ENCODE measurements at regions of chr12 and their contacts with region 1.

Region 1: DNA sequence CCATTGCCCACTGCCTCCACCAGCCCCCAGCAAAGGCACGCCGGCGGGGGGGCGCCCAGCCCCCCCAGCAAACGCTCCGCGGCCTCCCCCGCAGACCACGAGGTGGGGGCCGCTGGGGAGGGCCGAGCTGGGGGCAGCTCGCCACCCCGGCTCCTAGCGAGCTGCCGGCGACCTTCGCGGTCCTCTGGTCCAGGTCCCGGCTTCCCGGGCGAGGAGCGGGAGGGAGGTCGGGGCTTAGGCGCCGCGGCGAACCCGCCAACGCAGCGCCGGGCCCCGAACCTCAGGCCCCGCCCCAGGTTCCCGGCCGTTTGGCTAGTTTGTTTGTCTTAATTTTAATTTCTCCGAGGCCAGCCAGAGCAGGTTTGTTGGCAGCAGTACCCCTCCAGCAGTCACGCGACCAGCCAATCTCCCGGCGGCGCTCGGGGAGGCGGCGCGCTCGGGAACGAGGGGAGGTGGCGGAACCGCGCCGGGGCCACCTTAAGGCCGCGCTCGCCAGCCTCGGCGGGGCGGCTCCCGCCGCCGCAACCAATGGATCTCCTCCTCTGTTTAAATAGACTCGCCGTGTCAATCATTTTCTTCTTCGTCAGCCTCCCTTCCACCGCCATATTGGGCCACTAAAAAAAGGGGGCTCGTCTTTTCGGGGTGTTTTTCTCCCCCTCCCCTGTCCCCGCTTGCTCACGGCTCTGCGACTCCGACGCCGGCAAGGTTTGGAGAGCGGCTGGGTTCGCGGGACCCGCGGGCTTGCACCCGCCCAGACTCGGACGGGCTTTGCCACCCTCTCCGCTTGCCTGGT is at the start of gene CDKN1B:
- DNase-seq: peak; percentile 98
- H3K4me3 ChIP-seq: peak within 1 kb of the TSS; percentile 67 to 99 (median 95)
- H3K27ac ChIP-seq: peak within 1 kb of the TSS; percentile 98
- H3K4me1 ChIP-seq: peaks cover 49% of the 10 kb centered on the region
- H3K27me3 ChIP-seq: no peaks in the 10 kb centered on the region
- CTCF ChIP-seq: no peak
- POLR2A ChIP-seq: peak; percentile 79
- total RNA-seq, gene CDKN1B: 32.0 and 40.8 TPM in 2 replicates

Region 2: GRCh38 chr12:10721651-10722501 is 1995.1 kb before region 1 on chr12:
- CTCF ChIA-PET with region 1: no interaction called
- POLR2A ChIA-PET with region 1: no interaction called
- dilution Hi-C with region 1: no loop called
- intact Hi-C with region 1: no loop called
- DNase-seq: peak; percentile 100
- H3K4me3 ChIP-seq: peak overlapping the region; percentile 87 to 92 (median 88)
- H3K27ac ChIP-seq: peak overlapping the region; percentile 98
- H3K4me1 ChIP-seq: peaks cover 57% of the 10 kb centered on the region
- H3K27me3 ChIP-seq: no peaks in the 10 kb centered on the region
- CTCF ChIP-seq: no peak
- POLR2A ChIP-seq: peak; percentile 39

Region 3: DNA sequence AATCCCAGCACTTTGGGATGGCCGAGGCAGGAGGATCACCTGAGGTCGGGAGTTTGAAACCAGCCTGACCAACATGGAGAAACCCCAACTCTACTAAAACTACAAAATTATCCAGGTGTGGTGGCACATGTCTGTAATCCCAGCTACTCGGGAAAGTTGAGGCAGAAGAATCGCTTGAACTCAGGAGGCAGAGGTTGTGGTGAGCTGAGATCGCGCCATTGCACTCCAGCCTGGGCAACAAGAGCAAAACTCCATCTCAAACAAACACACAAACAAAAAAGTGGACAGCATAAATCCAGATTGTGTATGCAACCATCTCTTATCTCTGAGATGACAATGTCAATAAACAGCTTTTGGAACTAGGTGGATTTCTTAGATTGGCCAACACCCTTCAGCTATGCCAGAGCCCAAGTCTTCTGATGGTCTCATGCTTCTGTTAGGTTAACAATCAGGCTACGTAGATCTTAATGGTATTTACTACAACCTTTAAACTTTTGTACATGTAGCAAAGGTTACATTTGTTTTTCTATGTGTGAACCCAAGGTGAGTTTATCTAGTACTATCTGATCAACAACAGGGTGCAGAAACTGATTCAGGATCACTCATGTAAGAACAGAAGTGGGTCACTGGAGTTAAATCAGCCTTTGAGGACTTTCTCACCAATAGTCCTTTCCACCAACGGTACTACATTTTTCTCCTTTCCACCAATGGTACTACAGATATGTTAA is 228.0 kb before region 1 on chr12:
- CTCF ChIA-PET with region 1: no interaction called
- POLR2A ChIA-PET with region 1: no interaction called
- dilution Hi-C with region 1: no loop called
- intact Hi-C with region 1: no loop called
- DNase-seq: no peak
- H3K4me3 ChIP-seq: no peak overlapping the region
- H3K27ac ChIP-seq: no peak overlapping the region
- H3K4me1 ChIP-seq: peaks cover 10% of the 10 kb centered on the region
- H3K27me3 ChIP-seq: no peaks in the 10 kb centered on the region
- CTCF ChIP-seq: no peak
- POLR2A ChIP-seq: no peak

Region 4: GRCh38 chr12:12696562-12697383 is 20.2 kb before region 1 on chr12:
- CTCF ChIA-PET with region 1: interaction called, 4 read pairs
- POLR2A ChIA-PET with region 1: interaction called, 4 read pairs
- dilution Hi-C with region 1: no loop called
- intact Hi-C with region 1: loop called (anchors 2 kb)
- DNase-seq: peak; percentile 92
- H3K4me3 ChIP-seq: peak overlapping the region; percentile 45 to 98 (median 88)
- H3K27ac ChIP-seq: peak overlapping the region; percentile 98
- H3K4me1 ChIP-seq: peaks cover 9% of the 10 kb centered on the region
- H3K27me3 ChIP-seq: no peaks in the 10 kb centered on the region
- CTCF ChIP-seq: no peak
- POLR2A ChIP-seq: peak; percentile 61

Region 5: DNA sequence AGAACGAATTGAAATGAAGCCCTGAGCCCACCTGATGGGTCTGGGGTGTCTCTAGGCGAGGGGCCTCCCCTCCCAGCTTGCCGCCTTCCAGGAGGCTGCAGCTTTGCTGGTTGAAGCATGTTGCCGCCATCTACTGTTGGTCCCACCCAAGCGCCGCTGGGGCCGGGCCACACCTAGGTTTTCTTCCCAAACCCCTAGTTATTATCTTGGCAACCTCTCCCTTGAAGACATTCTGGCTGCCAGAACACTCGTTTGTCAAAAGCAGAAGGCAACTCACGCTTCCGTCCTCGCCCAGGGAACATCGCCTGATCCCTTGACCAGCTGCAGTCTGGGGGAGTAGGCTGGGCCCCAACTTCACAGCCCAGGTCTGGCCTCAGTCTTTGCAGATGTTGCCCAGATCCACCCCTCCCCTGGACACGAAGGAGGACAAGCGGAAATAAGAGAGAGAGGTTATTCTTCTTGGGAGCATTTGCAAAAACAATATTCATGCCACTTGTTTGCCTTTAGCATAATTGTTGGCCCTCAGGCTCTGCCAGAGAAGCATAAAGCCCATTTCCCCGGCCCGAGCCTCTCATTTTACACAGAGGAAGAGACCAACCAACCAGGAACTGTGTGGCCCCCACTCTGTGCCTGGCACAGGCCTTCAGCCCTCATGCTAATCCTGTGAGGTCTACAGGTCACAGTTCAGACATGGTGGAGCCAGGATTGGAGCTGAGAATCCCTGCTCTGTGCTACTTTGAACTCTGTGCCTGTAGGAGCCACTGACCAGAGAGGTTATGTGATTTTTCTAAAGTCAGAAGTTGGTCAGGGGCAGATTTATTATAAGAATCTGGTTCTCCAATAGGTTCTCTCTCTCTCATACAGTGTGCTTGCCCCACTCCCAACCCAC is 486.3 kb after region 1 on chr12:
- CTCF ChIA-PET with region 1: no interaction called
- POLR2A ChIA-PET with region 1: interaction called, 3 read pairs
- dilution Hi-C with region 1: no loop called
- intact Hi-C with region 1: loop called (anchors 5 kb)
- DNase-seq: peak; percentile 46
- H3K4me3 ChIP-seq: no peak overlapping the region
- H3K27ac ChIP-seq: peak overlapping the region; percentile 97
- H3K4me1 ChIP-seq: peaks cover 90% of the 10 kb centered on the region
- H3K27me3 ChIP-seq: no peaks in the 10 kb centered on the region
- CTCF ChIP-seq: peak; percentile 28 to 46
- POLR2A ChIP-seq: no peak

Measured in endothelial cell of umbilical vein (primary cell).